Aorta (tissue), 5 donors: ENCODE measurements at regions of chr16 and their contacts with region 1.

Region 1: DNA sequence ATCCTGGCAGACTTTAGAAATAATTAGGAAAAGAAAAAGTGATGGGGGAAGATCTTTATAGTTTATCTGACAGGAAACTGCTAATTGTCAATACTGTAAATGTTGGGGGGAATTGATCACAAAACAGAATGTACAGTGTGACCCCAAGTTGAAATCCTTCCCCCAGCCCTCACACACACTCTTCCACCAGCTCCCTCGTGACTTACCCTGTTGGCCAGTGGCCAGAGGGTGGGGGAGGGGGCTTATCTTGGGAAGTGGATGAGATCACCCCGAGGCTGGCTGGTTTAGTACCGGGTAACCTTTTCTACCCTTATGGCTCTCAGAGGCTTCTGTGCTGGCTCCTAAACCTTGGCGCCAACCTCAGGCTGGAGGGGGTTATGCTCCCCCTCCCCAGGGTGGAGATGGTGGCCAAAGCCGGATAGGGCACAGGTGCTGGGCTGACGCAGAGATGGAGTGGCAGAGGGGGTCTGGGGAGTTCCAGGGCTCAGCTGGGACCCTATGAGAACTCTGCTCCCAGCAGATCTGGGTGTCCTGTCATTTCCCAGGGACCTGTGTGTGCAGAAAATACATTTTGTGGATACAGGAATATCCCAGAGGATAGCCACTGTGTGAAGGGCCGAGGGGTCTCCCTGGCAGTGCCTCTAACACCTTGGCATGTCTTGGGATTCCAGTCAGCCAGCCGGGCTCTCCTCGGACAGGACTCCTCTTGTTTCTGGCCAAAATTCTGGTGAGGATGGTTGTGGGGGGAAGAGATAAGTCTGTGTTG is 18.6 kb downstream of the CDH16 start:
- DNase-seq: peak; percentile 86 to 95
- ATAC-seq: peak; percentile 53
- H3K4me3 ChIP-seq: no peak overlapping the region
- H3K27ac ChIP-seq: peak overlapping the region; percentile 73 to 81
- H3K4me1 ChIP-seq: peaks cover 4% of the 10 kb centered on the region in 2 donors
- H3K27me3 ChIP-seq: no peaks in the 10 kb centered on the region

Region 2: DNA sequence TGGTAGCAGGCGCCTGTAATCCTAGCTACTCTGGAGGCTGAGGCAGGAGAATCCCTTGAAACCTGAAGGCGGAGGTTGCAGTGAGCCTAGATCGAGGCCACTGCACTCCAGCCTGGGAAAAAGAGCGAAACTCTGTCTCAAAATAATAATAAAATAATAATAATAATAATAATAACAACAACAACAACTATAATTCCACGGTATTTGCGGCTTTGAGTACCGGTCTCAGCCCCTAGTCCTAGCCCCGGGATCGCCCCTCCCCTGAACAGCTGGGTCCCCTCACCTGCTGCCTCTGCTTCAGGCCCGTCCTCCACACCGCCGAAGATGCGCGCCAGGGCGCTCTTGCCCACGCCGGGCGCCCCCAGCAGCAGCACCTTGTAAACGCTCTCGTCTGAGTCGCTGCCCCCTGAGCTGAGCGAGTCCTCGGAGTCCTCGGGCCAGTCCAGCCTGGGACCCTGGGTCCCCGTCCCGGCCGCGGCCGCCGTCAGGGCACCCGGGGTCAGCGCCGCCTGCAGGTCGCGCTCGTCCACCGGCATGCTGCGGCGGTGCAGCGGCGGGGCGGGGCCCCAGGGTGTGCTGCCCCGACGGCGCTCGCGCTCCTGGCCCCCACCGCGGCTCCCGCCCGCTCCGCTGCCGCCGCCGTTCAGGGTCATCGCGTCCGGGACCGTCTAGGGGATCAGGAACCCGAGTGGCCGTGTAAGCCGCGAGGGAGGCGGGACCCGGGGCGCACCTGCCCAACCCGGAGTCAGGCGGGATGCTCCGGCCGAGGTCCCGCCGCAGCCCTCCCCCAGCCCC is 24.6 kb after region 1 on chr16:
- intact Hi-C with region 1: loop called (anchors 1 kb)
- DNase-seq: peak in 1 of 2 donors; percentile 88
- ATAC-seq: peak; percentile 57
- H3K4me3 ChIP-seq: peak overlapping the region; percentile 49 to 80
- H3K27ac ChIP-seq: peak overlapping the region; percentile 3 to 89
- H3K4me1 ChIP-seq: no peaks in the 10 kb centered on the region
- H3K27me3 ChIP-seq: no peaks in the 10 kb centered on the region

Region 3: DNA sequence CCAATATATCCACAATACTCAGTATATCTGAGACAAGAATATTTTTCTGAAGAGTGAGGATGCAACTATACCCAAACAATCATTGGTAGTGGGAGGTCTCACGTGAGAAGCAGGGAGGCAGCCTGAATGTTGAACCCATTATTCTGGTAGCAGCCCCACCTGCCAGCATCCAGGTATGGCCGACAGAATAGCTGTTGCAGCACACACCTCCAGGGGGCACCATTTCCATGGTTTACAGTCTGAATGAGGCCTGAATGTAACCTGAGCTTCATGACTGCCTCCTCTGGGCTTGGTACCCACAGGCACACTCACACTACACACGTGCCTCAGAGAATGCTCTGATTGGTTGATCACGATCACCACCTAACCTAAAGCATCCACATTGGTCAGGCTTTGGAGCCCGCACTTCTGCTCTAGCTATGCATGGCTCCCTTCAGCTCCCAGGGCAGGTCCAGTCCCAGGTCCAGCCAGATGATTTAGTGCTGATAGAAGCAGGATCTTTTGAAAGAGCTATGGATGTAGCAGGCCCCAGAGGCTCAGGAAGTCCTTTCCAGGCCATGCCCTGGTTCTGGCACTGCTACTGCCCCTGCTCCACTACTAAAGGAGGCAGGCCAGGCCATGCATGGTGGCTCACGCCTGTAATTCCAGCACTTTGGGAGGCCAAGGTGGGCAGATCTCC is 117.8 kb after region 1 on chr16:
- intact Hi-C with region 1: loop called in 1 of 2 experiments (anchors 5 kb)
- DNase-seq: peak; percentile 72 to 79
- ATAC-seq: peak; percentile 46
- H3K4me3 ChIP-seq: no peak overlapping the region
- H3K27ac ChIP-seq: no peak overlapping the region
- H3K4me1 ChIP-seq: no peaks in the 10 kb centered on the region
- H3K27me3 ChIP-seq: no peaks in the 10 kb centered on the region

Region 4: DNA sequence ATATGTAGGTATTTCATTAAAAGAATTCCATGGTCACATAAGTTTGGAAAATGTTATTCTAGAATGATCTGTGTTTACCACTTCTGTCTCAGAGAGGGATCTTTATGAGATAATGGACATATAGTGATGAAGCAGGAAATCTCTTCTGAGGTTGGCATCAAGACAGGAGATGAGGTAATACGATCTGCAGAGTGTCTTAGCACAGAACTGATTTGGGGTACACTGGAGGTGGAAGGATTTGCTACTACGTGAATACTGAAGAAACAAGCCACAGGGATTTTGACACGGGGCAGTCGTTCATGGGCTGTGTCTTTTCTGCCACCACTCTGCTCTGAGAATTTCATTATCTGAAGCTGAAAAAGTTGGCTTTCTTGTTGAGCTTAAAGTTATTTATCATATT is 134.4 kb after region 1 on chr16:
- intact Hi-C with region 1: no loop called
- DNase-seq: no peak
- ATAC-seq: no peak
- H3K4me3 ChIP-seq: no peak overlapping the region
- H3K27ac ChIP-seq: no peak overlapping the region
- H3K4me1 ChIP-seq: peaks cover 0 to 2% of the 10 kb centered on the region in 2 donors
- H3K27me3 ChIP-seq: no peaks in the 10 kb centered on the region